Activated CD4-positive, alpha-beta T cell treated with anti-CD3 and anti-CD28 coated beads, Interleukin-2, amount 10 ng/mL, durations not matched to agents 24 days and 14 days (primary cell): ENCODE measurements at regions of chr6 and their contacts with region 1.

Region 1: GRCh38 chr6:27809939-27810767 is 102.0 kb downstream of the OR2B2 start:
- DNase-seq: peak; percentile 96
- H3K4me3 Mint-ChIP-seq: peak overlapping the region; percentile 87
- H3K27ac Mint-ChIP-seq: peak overlapping the region; percentile 96
- H3K4me1 Mint-ChIP-seq: peaks cover 67% of the 10 kb centered on the region
- H3K27me3 Mint-ChIP-seq: no peaks in the 10 kb centered on the region

Region 2: GRCh38 chr6:27132532-27133280 is 677.4 kb before region 1 on chr6:
- intact Hi-C with region 1: loop called (anchors 1 kb)
- DNase-seq: peak; percentile 98
- H3K4me3 Mint-ChIP-seq: no peak overlapping the region
- H3K27ac Mint-ChIP-seq: no peak overlapping the region
- H3K4me1 Mint-ChIP-seq: peaks cover 37% of the 10 kb centered on the region
- H3K27me3 Mint-ChIP-seq: no peaks in the 10 kb centered on the region

Region 3: GRCh38 chr6:27795697-27796494 is 14.3 kb before region 1 on chr6:
- intact Hi-C with region 1: loop called (anchors 1 kb)
- DNase-seq: peak; percentile 93
- H3K4me3 Mint-ChIP-seq: peak overlapping the region; percentile 3
- H3K27ac Mint-ChIP-seq: peak overlapping the region; percentile 54
- H3K4me1 Mint-ChIP-seq: peaks cover 37% of the 10 kb centered on the region
- H3K27me3 Mint-ChIP-seq: peaks cover 20% of the 10 kb centered on the region

Region 4: GRCh38 chr6:27838058-27838944 is 28.1 kb after region 1 on chr6:
- intact Hi-C with region 1: loop called (anchors 1 kb)
- DNase-seq: peak; percentile 96
- H3K4me3 Mint-ChIP-seq: no peak overlapping the region
- H3K27ac Mint-ChIP-seq: no peak overlapping the region
- H3K4me1 Mint-ChIP-seq: peaks cover 28% of the 10 kb centered on the region
- H3K27me3 Mint-ChIP-seq: no peaks in the 10 kb centered on the region

Region 5: GRCh38 chr6:27871924-27872638 is 61.9 kb after region 1 on chr6:
- intact Hi-C with region 1: loop called (anchors 1 kb)
- DNase-seq: peak; percentile 97
- H3K4me3 Mint-ChIP-seq: peak overlapping the region; percentile 92
- H3K27ac Mint-ChIP-seq: peak overlapping the region; percentile 96
- H3K4me1 Mint-ChIP-seq: peaks cover 56% of the 10 kb centered on the region
- H3K27me3 Mint-ChIP-seq: peaks cover 2% of the 10 kb centered on the region